Breast epithelium (tissue), 4 donors: ENCODE measurements at regions of chr10 and their contacts with region 1.

Region 1: DNA sequence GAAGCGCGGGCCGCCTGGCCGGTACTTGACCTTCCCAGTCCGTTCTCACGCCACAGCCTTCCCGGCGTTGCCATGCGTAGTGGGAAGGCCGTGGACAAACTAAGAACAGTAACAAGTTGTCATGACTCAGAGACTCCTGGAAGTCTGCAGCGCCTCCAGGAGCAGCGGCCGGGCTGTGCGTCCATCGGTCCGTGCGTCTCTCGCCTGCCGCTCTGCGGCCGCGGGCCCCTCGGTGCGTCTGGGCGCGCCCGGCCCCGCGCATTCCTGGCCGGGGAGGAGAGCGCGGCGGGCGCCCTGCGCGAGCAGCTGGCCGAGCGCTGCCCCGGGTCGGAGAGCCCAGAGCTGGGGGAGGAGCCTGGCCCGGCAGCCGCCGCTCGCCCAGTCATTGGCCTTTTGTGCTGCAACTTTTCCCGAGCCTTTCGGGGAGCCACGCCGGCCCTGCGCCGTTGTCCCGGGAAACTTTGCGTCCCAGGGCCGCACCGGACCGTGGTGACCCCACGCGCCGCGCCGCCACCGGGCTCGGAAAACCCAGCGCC is 123.7 kb downstream of the TACC2 start:
- DNase-seq: peak; percentile 69 to 84
- H3K4me3 ChIP-seq: peak overlapping the region; percentile 59 to 93 (median 70)
- H3K27ac ChIP-seq: peak overlapping the region; percentile 98 to 99
- H3K4me1 ChIP-seq: no peaks in the 10 kb centered on the region
- H3K27me3 ChIP-seq: no peaks in the 10 kb centered on the region
- CTCF ChIP-seq: peak in 1 of 3 donors; percentile 36
- POLR2A ChIP-seq: no peak

Region 2: GRCh38 chr10:122051251-122051996 is 61.3 kb before region 1 on chr10:
- intact Hi-C with region 1: loop called (anchors 5 kb)
- DNase-seq: peak; percentile 85 to 88
- H3K4me3 ChIP-seq: no peak overlapping the region
- H3K27ac ChIP-seq: peak overlapping the region; percentile 69 to 71
- H3K4me1 ChIP-seq: peaks cover 0 to 3% of the 10 kb centered on the region in 2 donors
- H3K27me3 ChIP-seq: no peaks in the 10 kb centered on the region
- CTCF ChIP-seq: peak; percentile 56 to 84 (median 82)
- POLR2A ChIP-seq: no peak

Region 3: GRCh38 chr10:122089311-122090017 is 23.2 kb before region 1 on chr10:
- intact Hi-C with region 1: no loop called
- DNase-seq: no peak
- H3K4me3 ChIP-seq: no peak overlapping the region
- H3K27ac ChIP-seq: peak overlapping the region in 1 of 2 donors; percentile 10
- H3K4me1 ChIP-seq: peaks cover 0 to 4% of the 10 kb centered on the region in 2 donors
- H3K27me3 ChIP-seq: no peaks in the 10 kb centered on the region
- CTCF ChIP-seq: no peak
- POLR2A ChIP-seq: no peak

Region 4: DNA sequence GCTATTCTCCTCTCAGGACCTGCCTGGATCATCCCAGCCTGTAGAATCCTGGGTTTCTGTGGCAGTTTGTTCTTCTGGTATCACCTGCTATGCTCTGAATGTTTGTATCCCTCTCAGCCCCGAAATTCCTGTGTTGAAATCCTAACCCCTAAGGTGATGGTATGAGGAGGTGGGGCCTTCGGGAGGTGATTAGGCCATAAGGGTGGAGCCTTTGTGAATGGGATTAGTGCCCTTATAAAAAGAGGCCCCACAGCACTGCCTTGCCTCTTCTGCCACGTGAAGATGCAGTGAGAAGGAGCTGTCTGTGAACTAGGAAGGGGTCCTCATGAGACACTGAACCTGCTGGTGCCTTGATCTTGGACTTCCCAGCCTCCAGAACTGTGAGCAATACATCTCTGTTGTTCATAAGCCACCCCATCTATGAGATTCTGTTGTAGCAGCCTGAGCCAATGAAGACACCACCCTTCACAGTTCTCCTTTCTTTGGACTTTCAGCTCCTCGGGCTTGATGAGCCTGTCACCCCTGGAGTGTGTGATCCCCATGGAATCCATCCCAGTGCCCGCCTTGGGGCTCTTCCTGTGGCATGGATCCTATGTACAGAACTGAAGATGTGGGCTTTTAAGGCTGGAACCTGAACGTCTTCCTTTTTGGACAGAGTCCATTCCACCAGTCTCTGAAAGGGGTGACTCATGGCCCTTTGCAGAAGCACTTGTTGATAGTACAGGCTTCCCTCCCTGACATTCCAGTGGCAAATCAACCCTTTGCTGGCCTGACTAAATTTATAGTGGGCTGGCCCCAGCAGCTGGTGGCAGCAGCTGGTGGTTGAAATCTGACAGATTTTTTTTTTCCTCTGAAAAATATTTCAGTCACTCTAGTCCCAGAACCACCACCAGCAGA is 14.3 kb after region 1 on chr10:
- intact Hi-C with region 1: no loop called
- DNase-seq: no peak
- H3K4me3 ChIP-seq: no peak overlapping the region
- H3K27ac ChIP-seq: peak overlapping the region; percentile 34 to 73
- H3K4me1 ChIP-seq: no peaks in the 10 kb centered on the region
- H3K27me3 ChIP-seq: no peaks in the 10 kb centered on the region
- CTCF ChIP-seq: no peak
- POLR2A ChIP-seq: no peak